RWPE1 (cell line): ENCODE measurements at regions of chr13 and their contacts with region 1.

Region 1: GRCh38 chr13:32390048-32390447 is 37.9 kb downstream of the N4BP2L1 start:
- DNase-seq: no peak
- H3K27ac ChIP-seq: no peak overlapping the region
- CTCF ChIP-seq: no peak

Region 2: DNA sequence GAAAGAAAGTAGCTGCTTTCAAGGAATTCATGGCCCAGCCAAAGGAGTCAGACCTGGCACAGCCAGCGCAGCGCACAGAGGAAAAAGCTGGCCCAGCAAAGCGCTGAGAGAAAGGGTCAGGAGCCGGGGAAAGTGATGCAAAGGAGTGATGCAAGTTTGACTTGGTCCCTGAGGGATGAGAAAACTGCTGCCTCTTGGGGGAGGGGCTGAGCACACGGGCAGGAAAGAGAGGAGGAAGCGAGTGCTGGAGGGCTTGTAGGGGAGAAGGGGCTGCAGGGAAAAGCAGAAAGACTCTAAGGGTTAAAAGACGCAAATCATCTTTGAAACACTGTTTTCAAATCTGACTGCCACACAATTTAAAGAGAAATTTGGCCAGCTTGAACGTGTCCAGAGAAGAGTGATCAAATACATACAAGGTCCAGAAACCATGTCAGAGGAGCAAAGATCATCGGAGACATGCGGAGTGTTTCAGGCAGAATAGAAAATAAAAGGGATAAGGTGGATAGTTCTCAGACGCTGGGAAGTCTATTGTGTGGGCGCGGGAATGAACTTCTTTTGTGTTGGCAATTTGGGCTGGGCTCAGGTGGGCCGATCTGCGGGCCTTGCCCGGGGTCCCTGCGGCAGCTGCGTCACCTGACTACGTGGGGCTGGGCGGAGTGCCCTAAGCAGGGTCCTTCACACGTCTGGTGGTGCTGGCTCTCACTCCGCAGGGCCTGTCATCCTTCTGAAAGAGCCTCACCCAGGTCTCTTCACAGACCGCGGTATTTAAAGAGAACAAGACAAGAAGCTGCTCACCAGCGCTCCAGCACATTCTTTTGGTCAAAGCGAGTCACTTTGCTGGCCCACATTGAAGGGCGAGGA is 19.7 kb after region 1 on chr13:
- CTCF ChIA-PET with region 1: no interaction called
- POLR2A ChIA-PET with region 1: no interaction called
- DNase-seq: no peak
- H3K27ac ChIP-seq: no peak overlapping the region
- CTCF ChIP-seq: no peak

Region 3: DNA sequence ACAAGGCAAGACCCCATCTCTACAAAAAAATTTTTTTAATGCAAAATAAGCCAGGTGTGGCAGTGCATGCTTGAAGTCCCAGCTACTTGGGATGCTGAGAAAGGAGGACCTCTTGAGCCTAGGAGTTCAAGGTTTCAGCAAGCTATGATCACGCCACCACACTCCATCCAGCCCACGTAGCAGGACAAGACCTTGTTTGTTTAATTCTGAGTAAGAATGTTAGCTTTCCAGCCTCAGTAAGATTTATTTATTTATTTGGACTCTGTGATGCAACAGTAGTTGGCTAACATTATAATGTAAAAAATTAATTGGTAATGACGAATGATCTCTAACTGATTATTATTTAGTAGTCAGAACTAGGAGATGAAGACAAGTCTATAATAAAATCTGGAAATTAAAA is 125.2 kb after region 1 on chr13:
- CTCF ChIA-PET with region 1: no interaction called
- POLR2A ChIA-PET with region 1: no interaction called
- DNase-seq: no peak
- H3K27ac ChIP-seq: no peak overlapping the region
- CTCF ChIP-seq: no peak

Region 4: GRCh38 chr13:32582281-32582680 is 192.2 kb after region 1 on chr13:
- CTCF ChIA-PET with region 1: no interaction called
- POLR2A ChIA-PET with region 1: interaction called, 14 read pairs
- DNase-seq: no peak
- H3K27ac ChIP-seq: no peak overlapping the region
- CTCF ChIP-seq: no peak

Region 5: DNA sequence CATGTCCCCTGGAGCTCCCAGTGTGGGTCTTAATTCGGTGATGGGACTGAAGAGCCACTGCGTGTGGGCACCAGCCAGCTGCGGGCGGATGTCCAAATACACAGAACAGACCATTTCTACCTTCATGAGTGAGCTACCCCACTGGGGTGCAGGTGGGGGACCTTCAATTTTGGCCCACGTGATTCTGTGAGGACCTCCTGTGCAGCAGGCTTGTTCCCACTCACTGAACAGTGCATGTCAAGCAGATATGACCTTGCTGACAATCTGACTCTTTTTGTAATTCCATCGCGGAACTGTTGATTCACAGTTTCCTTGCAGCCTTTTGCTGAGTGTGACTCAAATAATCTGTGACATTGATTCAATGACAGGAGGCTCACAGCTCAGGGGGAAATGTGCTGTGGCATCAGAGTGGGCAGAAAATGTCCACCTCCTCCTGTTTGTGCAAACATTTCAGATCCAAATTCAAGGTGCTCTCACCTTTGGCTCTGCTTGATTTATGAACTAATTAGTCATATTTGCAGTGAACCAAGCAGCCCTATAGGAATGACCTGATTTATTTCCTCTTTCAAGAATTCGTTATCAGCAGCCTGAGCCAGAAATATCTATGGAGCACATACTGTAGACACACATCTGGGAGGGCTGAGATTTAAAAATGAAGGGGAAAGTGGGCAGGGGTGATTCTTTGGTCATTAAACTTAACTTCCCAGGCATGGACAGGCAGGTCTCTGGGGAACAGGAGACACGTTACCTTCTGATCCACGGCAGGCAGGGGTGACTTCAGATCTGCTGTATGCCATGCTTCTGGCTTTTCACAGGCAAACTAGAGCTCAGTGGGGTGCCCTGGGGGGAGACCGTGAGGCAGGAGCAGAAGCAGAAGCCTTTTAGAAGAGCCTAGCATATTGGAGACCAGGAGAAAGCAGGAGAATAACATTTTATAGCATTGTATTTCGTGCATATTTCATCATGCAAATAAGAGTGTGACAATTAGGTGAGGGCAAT is 456.2 kb after region 1 on chr13:
- CTCF ChIA-PET with region 1: no interaction called
- POLR2A ChIA-PET with region 1: no interaction called
- DNase-seq: no peak
- H3K27ac ChIP-seq: no peak overlapping the region
- CTCF ChIP-seq: no peak